Heart left ventricle (tissue), 16 donors: ENCODE measurements at regions of chr4 and their contacts with region 1.

Region 1: DNA sequence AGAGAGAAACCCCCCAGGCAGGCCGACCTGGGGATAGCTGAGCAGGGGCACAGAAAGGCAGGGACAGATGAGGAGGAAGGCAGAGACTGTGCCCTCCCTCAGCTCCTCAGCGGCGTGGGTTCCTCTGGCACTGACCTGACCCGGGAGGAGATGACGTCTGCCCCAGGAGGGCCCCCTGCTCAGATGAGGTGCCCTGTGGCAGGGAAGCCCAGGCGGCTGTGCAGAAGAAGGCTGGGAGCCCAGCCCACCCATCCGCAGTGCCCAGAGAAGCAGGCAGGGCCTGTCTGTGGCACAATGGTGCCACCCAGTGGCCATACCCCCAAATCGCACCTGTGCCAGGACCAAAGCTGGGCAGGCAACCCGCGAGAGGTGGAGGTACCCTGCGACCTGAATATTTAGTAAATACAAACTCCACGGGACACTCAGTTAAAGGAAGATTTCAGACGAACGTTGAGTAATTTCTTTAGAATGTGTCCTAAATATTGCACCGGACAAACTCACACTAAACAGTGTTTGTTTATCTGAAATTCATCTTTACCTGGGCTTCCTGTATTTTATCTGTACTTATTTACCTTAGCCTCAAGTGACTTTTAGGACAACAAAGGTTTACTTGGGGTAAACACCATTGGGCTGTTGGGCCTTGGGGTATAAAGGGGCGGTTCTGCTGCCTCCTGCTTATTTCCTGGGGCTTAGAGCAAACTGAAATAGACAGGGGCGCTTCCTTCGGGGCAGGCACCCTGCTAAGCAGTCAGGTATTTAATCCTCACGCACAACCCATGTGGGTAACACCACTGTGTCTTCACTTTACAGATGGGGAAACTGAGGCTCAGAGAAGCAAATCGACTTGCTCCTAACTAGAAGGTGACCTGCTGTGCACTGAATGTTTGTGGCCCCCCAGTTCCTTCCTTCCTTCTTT is 46.5 kb upstream of the HMX1 start:
- DNase-seq: peak in 4 of 5 donors; percentile 41 to 57 (median 49)
- ATAC-seq: peak; percentile 55 to 72 (median 68)
- H3K4me3 ChIP-seq: no peak overlapping the region
- H3K27ac ChIP-seq: no peak overlapping the region
- H3K4me1 ChIP-seq: no peaks in the 10 kb centered on the region
- H3K27me3 ChIP-seq: peaks cover 0 to 41% (median 8%) of the 10 kb centered on the region in 9 donors
- CTCF ChIP-seq: peak; percentile 61 to 88 (median 79)
- POLR2A ChIP-seq: no peak

Region 2: GRCh38 chr4:8468746-8469535 is 449.2 kb before region 1 on chr4:
- intact Hi-C with region 1: loop called in 3 of 10 experiments (anchors 5 to 10 kb)
- DNase-seq: peak; percentile 38 to 85 (median 60)
- ATAC-seq: peak in 3 of 4 donors; percentile 57 to 69 (median 66)
- H3K4me3 ChIP-seq: no peak overlapping the region
- H3K27ac ChIP-seq: no peak overlapping the region
- H3K4me1 ChIP-seq: peaks cover 0 to 21% (median 2%) of the 10 kb centered on the region in 12 donors
- H3K27me3 ChIP-seq: no peaks in the 10 kb centered on the region
- CTCF ChIP-seq: peak; percentile 81 to 94 (median 90)
- POLR2A ChIP-seq: no peak

Region 3: DNA sequence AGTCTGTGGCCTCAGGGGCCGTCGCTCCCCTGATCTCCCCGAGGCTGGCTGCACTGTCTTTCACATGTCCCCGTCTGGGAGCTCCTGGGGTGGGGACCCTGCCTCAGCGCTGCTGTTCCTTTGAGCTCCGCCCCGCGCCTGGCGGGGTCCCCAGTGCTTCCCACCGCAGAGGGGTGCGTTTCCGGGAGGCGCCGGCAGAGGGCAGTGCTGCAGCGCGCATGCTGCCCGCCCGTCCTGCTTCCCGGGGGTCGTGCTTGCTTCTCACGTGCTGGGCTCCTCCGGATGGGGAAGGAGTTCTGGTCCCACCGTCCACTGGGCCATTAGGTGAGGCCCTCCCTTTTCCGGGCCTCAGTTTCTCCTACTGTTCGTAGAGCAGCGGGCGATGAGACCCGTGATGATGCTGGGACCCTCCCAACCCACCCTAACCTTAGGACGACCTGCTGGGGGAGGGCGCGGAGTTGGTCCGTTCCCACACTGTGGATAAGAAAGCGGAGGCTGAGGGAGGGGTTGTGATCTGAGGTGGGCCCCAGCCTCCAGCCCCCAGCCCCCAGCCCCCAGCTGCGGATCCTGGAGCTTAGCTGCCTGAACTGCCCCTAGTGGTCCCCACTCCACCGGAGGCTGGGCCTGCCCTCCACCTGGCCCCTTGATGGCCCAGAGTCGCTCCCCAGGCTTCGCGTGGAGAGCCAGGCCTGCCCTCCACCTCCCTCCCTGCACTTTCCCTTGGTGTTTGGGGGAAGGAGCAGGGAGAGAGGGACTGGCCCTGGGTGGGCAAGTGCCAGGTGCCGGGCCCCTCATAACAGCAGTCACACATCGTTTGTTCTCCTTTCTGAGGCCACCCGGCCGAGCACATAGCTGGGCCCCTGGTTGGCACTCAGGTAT is 310.3 kb before region 1 on chr4:
- intact Hi-C with region 1: loop called (anchors 1 to 10 kb)
- DNase-seq: peak in 2 of 5 donors; percentile 24 to 36
- ATAC-seq: peak in 1 of 4 donors; percentile 13
- H3K4me3 ChIP-seq: no peak overlapping the region
- H3K27ac ChIP-seq: no peak overlapping the region
- H3K4me1 ChIP-seq: peaks cover 0 to 21% (median 5%) of the 10 kb centered on the region in 12 donors
- H3K27me3 ChIP-seq: peaks cover 0 to 18% (median 8%) of the 10 kb centered on the region in 9 donors
- CTCF ChIP-seq: peak; percentile 85 to 99 (median 96)
- POLR2A ChIP-seq: no peak

Region 4: GRCh38 chr4:8615921-8616785 is 302.0 kb before region 1 on chr4:
- intact Hi-C with region 1: loop called in 1 of 10 experiments (anchors 10 kb)
- DNase-seq: peak in 3 of 5 donors; percentile 4 to 23 (median 18)
- ATAC-seq: no peak
- H3K4me3 ChIP-seq: no peak overlapping the region
- H3K27ac ChIP-seq: no peak overlapping the region
- H3K4me1 ChIP-seq: peaks cover 0 to 11% (median 2%) of the 10 kb centered on the region in 12 donors
- H3K27me3 ChIP-seq: peaks cover 0 to 18% (median 0%) of the 10 kb centered on the region in 9 donors
- CTCF ChIP-seq: no peak
- POLR2A ChIP-seq: no peak

Region 5: GRCh38 chr4:8847764-8848163 is 70.4 kb before region 1 on chr4:
- intact Hi-C with region 1: no loop called
- DNase-seq: peak in 2 of 5 donors; percentile 7 to 11
- ATAC-seq: no peak
- H3K4me3 ChIP-seq: no peak overlapping the region
- H3K27ac ChIP-seq: no peak overlapping the region
- H3K4me1 ChIP-seq: no peaks in the 10 kb centered on the region
- H3K27me3 ChIP-seq: peaks cover 9 to 86% (median 27%) of the 10 kb centered on the region in 9 donors
- CTCF ChIP-seq: no peak
- POLR2A ChIP-seq: no peak